Activated CD4-positive, alpha-beta memory T cell treated with anti-CD3 and anti-CD28 coated beads, Interleukin-2, amount 10 ng/mL, durations not matched to agents 7 days and 5 days (primary cell): ENCODE measurements at regions of chr6 and their contacts with region 1.

Region 1: DNA sequence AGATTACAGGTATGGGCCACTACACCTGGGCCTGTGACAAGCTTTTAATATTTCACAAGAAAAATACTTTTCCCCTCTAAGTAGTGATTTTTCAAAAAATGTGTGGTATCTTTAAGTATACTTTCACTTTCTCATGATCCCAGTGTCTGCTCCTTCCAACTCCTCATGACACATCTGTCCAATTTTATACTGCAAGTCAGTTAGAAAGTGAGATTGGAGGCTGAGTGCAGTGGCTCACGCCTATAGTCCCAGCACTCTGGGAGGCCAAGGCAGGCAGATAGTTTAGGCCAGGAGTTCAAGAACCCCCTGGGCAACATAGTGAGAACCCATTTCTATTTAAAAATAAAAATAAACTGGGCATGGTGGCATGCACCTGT is 20.2 kb downstream of the PIM1 start:
- DNase-seq: no peak
- H3K4me3 Mint-ChIP-seq: no peak overlapping the region
- H3K27ac Mint-ChIP-seq: peak overlapping the region; percentile 67
- H3K4me1 Mint-ChIP-seq: peaks cover 71% of the 10 kb centered on the region
- H3K27me3 Mint-ChIP-seq: no peaks in the 10 kb centered on the region

Region 2: DNA sequence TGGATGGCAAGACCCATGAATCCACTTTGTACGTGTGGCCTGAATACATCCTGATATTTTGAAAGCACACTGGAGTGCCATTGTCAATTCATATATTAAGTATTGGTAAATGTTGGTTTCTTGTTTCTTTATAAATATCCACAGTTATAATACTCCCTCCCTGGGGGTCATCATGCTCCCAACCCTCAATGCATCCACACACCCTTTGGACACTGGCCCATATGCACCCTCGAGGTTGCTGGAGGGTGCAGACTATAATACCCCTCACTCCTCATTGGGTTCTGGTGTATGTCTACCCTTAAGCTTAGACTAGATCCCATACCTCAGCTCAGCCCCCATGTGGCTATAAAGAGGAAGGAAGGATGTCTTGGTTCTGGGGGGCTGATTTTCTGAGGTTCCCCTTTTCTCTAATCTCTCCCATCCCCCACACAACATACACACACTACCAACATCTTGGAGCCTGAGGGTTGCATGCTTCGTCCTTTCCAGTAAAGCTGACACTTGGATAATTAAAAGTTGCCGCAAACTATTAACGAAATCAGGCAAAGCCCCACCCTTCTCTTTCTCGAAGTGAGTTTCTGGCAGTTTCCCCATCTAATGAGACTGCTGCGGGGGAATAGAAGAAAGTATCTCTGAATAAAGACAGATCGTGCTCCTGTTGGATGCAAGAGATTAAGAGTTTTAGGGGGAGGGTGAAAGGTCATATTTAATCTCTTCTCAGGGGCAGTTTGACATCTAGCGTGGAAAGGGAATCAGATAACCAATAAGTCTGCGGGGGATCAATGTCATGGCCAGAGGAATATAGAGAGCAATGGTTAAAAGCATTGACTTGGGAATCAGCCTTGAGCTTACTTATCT is 12.8 kb before region 1 on chr6:
- CTCF ChIA-PET with region 1: interaction called, 14 read pairs
- POLR2A ChIA-PET with region 1: interaction called, 218 read pairs
- DNase-seq: no peak
- H3K4me3 Mint-ChIP-seq: peak overlapping the region; percentile 36
- H3K27ac Mint-ChIP-seq: peak overlapping the region; percentile 98
- H3K4me1 Mint-ChIP-seq: peaks cover 80% of the 10 kb centered on the region
- H3K27me3 Mint-ChIP-seq: no peaks in the 10 kb centered on the region